ENCODE measurements at regions of chr2 and their contacts with region 1.

Region 1: GRCh38 chr2:237629739-237630138 is 2.4 kb downstream of the LRRFIP1 start:
- DNase-seq: no peak
- H3K4me3 ChIP-seq: no peak overlapping the region
- H3K27ac ChIP-seq: no peak overlapping the region
- H3K4me1 ChIP-seq: peaks cover 0 to 80% (median 48%) of the 10 kb centered on the region in 4 donors
- H3K27me3 ChIP-seq: no peaks in the 10 kb centered on the region
- CTCF ChIP-seq: no peak

Region 2: DNA sequence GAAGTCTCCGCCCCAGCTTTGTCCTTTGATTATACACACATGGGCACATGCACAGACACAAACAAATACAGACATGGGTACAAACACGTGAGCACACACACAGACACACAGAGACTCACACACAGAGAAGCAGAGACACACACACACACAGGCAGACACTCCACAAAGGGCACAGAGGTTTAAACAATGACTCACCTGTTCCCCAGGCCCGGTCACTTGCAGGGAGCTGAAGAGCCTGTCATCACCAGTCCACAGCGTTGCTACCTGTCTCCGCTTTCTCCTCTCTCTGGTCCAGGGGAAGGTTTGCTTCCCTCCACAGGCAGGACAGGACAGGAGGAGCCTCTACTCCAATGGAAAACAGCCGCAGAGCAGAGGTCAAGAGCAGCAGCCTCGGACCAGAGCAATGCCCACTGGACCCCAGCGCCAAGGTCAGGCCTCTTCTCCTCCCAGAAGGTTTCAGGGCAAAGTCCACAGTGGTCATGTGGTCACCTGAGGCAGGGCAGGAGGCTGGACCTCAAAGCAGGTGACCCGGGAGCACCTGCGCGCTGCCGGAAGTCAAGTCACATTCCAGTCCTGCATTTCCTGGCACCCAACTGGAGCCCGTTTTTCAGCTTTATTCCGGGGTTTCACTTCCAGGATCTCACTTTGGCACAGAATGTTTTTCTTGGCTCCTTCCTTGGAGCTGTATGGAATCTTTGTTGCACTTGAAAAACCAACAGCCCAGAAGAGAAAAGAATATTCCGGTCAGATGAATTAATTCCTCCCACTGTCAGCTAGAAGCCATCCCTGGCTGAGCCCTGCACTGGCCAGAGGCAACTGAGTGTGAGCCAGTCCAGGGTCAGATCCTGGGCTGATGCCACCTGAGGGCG is 39.2 kb before region 1 on chr2 and contains the start of gene RAB17:
- intact Hi-C with region 1: no loop called
- DNase-seq: no peak
- H3K4me3 ChIP-seq: no peak within 1 kb of the TSS
- H3K27ac ChIP-seq: peak within 1 kb of the TSS; percentile 1 to 16
- H3K4me1 ChIP-seq: peaks cover 5 to 45% (median 37%) of the 10 kb centered on the region in 4 donors
- H3K27me3 ChIP-seq: no peaks in the 10 kb centered on the region
- CTCF ChIP-seq: no peak

Region 3: DNA sequence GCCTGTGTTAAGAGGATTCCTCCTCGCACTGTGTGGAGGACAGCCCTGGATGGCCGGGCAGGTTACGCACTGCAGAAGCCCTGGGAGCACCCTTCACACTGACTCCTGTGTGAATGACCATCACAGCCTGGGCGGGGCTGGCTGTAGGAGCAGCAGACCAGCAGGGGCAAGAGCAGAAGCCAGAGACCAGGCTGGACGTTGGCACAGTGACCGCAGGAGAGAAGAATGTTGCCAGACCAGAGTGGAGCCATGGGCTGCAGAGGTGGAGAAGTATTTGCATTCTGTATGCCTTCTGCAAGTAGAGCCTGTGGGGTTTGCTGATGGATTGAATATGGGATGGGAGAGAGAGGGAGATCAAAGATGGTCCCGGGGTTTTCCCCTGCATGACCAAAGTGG is 20.7 kb after region 1 on chr2:
- intact Hi-C with region 1: loop called (anchors 2 kb)
- DNase-seq: no peak
- H3K4me3 ChIP-seq: no peak overlapping the region
- H3K27ac ChIP-seq: no peak overlapping the region
- H3K4me1 ChIP-seq: peaks cover 0 to 55% (median 3%) of the 10 kb centered on the region in 4 donors
- H3K27me3 ChIP-seq: no peaks in the 10 kb centered on the region
- CTCF ChIP-seq: no peak

Measured in tibial artery (tissue), 4 donors.